HCT116 (cell line): ENCODE measurements at regions of chr9 and their contacts with region 1.

Region 1: DNA sequence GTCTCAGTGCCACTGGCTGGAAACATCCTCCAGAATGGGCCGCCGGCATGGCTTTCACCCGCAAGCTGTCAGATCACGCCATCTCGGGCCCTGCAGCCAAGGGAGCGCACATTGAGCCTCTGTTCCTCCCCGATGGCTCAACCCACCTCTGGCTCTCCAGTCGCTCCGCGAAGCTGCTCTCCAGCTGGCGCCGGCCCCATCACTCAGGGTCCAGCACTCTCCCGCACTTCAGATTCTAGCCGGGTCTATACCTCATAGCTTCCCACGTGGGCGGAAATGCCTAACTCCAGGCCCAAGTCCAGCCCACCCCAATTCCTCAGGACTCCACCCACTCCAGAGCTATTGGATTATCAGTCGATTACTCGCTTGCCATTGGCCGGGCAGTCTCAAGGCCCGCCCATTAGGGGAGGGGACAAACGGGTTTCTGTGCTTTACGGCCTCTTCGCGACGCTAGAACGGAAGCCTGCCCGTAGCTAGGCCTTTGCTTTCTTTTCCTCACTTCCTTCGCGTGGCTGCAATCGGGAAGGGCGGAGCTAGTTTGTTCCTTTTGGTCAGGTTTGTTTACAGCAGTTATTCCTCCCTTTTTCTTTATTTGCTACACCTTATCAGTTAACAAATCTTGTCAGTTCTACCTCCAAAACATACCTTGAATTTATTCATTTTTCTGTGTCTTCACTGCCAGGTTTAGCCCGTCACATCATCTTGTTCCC is at the start of gene NOL6:
- DNase-seq: peak; percentile 99
- ATAC-seq: peak; percentile 100
- H3K4me3 ChIP-seq: peak within 1 kb of the TSS; percentile 90 to 92
- H3K27ac ChIP-seq: peak within 1 kb of the TSS; percentile 27
- H3K4me1 ChIP-seq: peaks cover 8 to 16% of the 10 kb centered on the region in 2 experiments; a peak in 3 of 4 replicates
- H3K27me3 ChIP-seq: no peaks in the 10 kb centered on the region
- CTCF ChIP-seq: no peak
- POLR2A ChIP-seq: peak; percentile 54
- RAD21 ChIP-seq: no peak
- total RNA-seq, gene NOL6: 36.4 TPM

Region 2: DNA sequence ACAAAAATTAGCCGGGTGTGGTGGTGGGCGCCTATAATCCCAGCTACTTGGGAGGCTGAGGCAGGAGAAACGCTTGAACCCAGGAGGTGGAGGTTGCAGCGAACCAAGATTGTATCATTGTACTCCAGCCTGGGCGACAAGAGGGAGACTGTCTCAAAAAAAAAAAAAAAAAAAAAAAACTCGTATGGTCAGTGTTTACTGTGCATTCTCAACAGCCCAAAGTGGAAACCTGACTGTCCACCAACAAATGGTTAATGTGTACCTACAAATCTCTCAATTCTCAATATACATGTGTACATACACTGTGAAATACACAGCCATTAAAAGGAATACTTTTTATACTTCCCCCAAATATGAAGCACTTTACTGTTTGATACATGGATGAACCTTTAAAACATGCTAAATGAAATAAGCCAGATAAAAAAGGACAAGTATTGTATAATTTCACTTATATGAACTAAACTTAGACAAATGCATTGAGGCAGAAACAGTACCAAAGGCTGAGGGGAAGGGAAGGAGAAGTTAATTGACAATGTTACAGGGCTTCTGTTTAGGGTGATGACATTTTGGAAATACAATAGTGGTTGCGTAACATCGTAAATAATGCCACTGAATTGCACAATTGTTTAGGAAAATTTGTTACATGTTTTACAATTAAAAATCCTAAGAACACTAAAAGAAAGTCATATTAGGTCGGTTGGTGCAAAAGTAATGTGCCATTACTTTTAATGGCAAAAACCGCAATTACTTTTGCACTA is 432.2 kb before region 1 on chr9:
- CTCF ChIA-PET with region 1: no interaction called
- POLR2A ChIA-PET with region 1: no interaction called
- RAD21 ChIA-PET with region 1: no interaction called
- intact Hi-C with region 1: no loop called
- DNase-seq: no peak
- ATAC-seq: no peak
- H3K4me3 ChIP-seq: no peak overlapping the region
- H3K27ac ChIP-seq: no peak overlapping the region
- H3K4me1 ChIP-seq: no peaks in the 10 kb centered on the region
- H3K27me3 ChIP-seq: no peaks in the 10 kb centered on the region
- CTCF ChIP-seq: no peak
- POLR2A ChIP-seq: no peak
- RAD21 ChIP-seq: no peak

Region 3: GRCh38 chr9:33452828-33453271 is 20.9 kb before region 1 on chr9:
- CTCF ChIA-PET with region 1: interaction called, 24 read pairs
- POLR2A ChIA-PET with region 1: interaction called, 27 read pairs
- RAD21 ChIA-PET with region 1: interaction called in 1 of 2 experiments, 3 read pairs
- intact Hi-C with region 1: no loop called
- DNase-seq: peak; percentile 63
- ATAC-seq: peak; percentile 87
- H3K4me3 ChIP-seq: peak overlapping the region in 1 of 2 experiments; percentile 13; a peak in 2 of 4 replicates
- H3K27ac ChIP-seq: peak overlapping the region; percentile 49
- H3K4me1 ChIP-seq: peaks cover 36 to 58% of the 10 kb centered on the region in 2 experiments
- H3K27me3 ChIP-seq: no peaks in the 10 kb centered on the region
- CTCF ChIP-seq: peak in 2 of 3 experiments; percentile 91; a peak in 4 of 6 replicates
- POLR2A ChIP-seq: no peak
- RAD21 ChIP-seq: no peak

Region 4: DNA sequence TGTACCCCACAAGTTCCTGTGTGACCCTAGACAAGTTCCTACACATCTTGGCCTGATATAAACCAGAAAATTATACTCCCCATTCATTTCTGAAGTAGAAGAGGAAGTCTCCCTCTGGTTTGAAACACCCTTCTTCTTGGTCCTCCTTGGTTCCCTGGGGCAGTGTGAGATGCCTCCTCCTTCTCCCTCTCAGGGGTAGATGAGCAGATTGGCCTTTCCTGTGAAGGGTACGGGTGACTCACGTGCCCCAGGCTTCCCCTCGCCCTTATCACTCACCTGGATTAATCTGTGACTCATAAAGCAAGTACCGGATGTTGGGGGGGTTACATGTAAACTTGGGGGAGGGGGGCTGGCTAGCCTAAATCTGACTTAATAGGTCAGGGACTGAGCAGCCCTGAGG is 15.4 kb before region 1 on chr9:
- CTCF ChIA-PET with region 1: interaction called, 4 read pairs
- POLR2A ChIA-PET with region 1: interaction called, 27 read pairs
- RAD21 ChIA-PET with region 1: interaction called in 1 of 2 experiments, 3 read pairs
- intact Hi-C with region 1: no loop called
- DNase-seq: peak; percentile 75
- ATAC-seq: peak; percentile 86
- H3K4me3 ChIP-seq: peak overlapping the region; percentile 4 to 32; a peak in 2 of 4 replicates
- H3K27ac ChIP-seq: peak overlapping the region; percentile 86
- H3K4me1 ChIP-seq: peaks cover 40 to 68% of the 10 kb centered on the region in 2 experiments
- H3K27me3 ChIP-seq: no peaks in the 10 kb centered on the region
- CTCF ChIP-seq: no peak
- POLR2A ChIP-seq: peak; percentile 33
- RAD21 ChIP-seq: no peak

Region 5: GRCh38 chr9:33489066-33489465 is 15.3 kb after region 1 on chr9:
- CTCF ChIA-PET with region 1: no interaction called
- POLR2A ChIA-PET with region 1: interaction called, 10 read pairs
- RAD21 ChIA-PET with region 1: no interaction called
- intact Hi-C with region 1: no loop called
- DNase-seq: no peak
- ATAC-seq: no peak
- H3K4me3 ChIP-seq: no peak overlapping the region
- H3K27ac ChIP-seq: no peak overlapping the region
- H3K4me1 ChIP-seq: no peaks in the 10 kb centered on the region
- H3K27me3 ChIP-seq: no peaks in the 10 kb centered on the region
- CTCF ChIP-seq: no peak
- POLR2A ChIP-seq: no peak
- RAD21 ChIP-seq: no peak